ENCODE measurements at regions of chr16 and their contacts with region 1.

Region 1: DNA sequence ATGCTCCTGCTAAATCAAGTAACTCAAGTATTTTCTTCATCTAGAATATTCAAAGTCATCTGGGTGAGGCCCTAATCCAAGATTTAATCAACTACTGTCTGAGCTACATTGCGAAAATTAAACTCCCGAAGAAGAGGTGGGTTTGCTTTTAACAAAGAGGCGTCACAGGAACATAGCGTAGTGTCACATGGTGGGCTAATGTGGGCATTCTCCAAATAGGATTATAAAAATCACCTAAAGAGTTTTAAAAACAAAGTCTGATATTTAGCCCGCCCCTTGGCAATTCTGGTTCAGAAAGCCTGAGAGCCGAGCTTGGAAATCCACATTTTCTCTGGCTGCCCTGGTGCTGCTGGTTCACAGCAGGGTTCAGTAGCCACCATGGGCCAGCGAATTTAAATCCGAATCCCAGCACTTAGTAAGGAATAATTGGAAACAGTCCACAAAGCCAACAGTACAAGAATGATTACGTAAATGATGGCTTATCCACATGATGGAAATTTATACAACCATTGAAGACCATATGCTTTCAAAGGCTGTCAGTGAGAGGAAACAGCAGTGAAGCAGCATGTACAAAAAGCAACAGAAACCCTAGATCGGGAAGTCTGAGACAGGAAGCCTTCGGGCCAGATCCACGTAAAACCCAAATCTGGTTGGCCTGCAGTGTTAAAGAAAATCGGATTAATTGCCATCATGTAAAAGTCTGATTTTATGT is 8.8 kb downstream of the PMM2 start:
- DNase-seq: no peak
- ATAC-seq: peak; percentile 24
- H3K4me3 ChIP-seq: no peak overlapping the region
- H3K27ac ChIP-seq: peak overlapping the region in 1 of 4 donors; percentile 62
- H3K4me1 ChIP-seq: peaks cover 27% of the 10 kb centered on the region
- H3K27me3 ChIP-seq: no peaks in the 10 kb centered on the region
- CTCF ChIP-seq: no peak
- POLR2A ChIP-seq: no peak

Region 2: DNA sequence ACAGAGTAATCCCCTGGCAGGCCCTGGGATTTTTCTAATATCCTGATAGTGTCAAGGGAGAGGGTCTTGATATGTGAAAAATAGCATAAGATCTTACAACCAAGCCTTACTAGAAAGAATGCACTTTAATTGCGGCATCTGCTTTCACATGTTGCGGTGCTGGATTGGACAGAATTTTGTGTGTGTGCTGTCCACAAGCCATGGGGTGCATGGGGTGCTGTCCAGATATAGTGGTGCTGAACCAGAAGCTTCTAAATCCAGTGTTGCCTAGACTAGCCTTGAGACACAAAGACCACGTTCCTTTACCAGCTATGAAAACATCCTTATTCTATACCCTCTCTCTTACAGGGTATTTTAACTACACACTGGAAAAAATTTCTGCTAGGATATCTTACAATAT is 460.1 kb before region 1 on chr16:
- intact Hi-C with region 1: no loop called
- DNase-seq: peak; percentile 11 to 21 (median 18)
- ATAC-seq: no peak
- H3K4me3 ChIP-seq: no peak overlapping the region
- H3K27ac ChIP-seq: no peak overlapping the region
- H3K4me1 ChIP-seq: peaks cover 11% of the 10 kb centered on the region
- H3K27me3 ChIP-seq: no peaks in the 10 kb centered on the region
- CTCF ChIP-seq: no peak
- POLR2A ChIP-seq: no peak

Region 3: GRCh38 chr16:8850279-8850885 is 44.0 kb after region 1 on chr16:
- intact Hi-C with region 1: loop called (anchors 10 kb)
- DNase-seq: peak in 1 of 4 donors; percentile 44
- ATAC-seq: peak; percentile 47
- H3K4me3 ChIP-seq: no peak overlapping the region
- H3K27ac ChIP-seq: peak overlapping the region in 2 of 4 donors; percentile 22 to 52
- H3K4me1 ChIP-seq: peaks cover 16% of the 10 kb centered on the region
- H3K27me3 ChIP-seq: no peaks in the 10 kb centered on the region
- CTCF ChIP-seq: no peak
- POLR2A ChIP-seq: no peak

Measured in body of pancreas (tissue), 4 donors.